PC-3 (cell line): ENCODE measurements at regions of chr3 and their contacts with region 1.

Region 1: GRCh38 chr3:177306252-177306651 is 109.0 kb upstream of the TBL1XR1 start:
- DNase-seq: peak; percentile 89
- ATAC-seq: peak; percentile 78
- H3K4me3 ChIP-seq: no peak overlapping the region
- H3K27ac ChIP-seq: no peak overlapping the region
- H3K4me1 ChIP-seq: peaks cover 10% of the 10 kb centered on the region
- H3K27me3 ChIP-seq: no peaks in the 10 kb centered on the region
- CTCF ChIP-seq: no peak

Region 2: DNA sequence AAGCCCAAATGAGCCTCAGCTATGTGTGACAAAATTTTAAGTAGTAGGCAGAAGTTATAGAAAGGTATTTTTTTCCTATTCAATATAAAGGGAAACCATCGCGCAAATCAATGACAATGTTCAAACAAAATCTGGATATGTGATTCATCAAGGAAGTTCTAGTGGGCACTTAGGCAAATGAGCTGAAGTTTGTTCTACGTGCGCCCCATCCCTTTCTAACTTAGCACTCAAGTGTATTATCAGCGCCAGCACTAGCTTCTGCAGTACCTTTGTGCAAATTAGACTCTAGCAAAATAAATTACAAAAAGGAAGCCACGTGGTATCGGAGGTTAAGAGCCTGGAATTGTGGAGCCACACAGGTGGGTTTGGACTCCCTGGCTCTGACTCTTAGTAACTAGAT is 200.1 kb before region 1 on chr3:
- CTCF ChIA-PET with region 1: no interaction called
- POLR2A ChIA-PET with region 1: no interaction called
- intact Hi-C with region 1: no loop called
- DNase-seq: no peak
- ATAC-seq: no peak
- H3K4me3 ChIP-seq: no peak overlapping the region
- H3K27ac ChIP-seq: no peak overlapping the region
- H3K4me1 ChIP-seq: no peaks in the 10 kb centered on the region
- H3K27me3 ChIP-seq: no peaks in the 10 kb centered on the region
- CTCF ChIP-seq: no peak

Region 3: GRCh38 chr3:177345049-177345972 is 39.1 kb after region 1 on chr3:
- CTCF ChIA-PET with region 1: no interaction called
- POLR2A ChIA-PET with region 1: no interaction called
- intact Hi-C with region 1: loop called (anchors 1 kb)
- DNase-seq: peak; percentile 97
- ATAC-seq: peak; percentile 99
- H3K4me3 ChIP-seq: peak overlapping the region; percentile 11; the same call in 1 of the 2 replicates
- H3K27ac ChIP-seq: peak overlapping the region; percentile 83
- H3K4me1 ChIP-seq: peaks cover 24% of the 10 kb centered on the region
- H3K27me3 ChIP-seq: no peaks in the 10 kb centered on the region
- CTCF ChIP-seq: no peak